H1 (cell line): ENCODE measurements at regions of chr12 and their contacts with region 1.

Region 1: GRCh38 chr12:8681041-8681902 is 16.5 kb upstream of the RIMKLB start:
- DNase-seq: no peak
- H3K4me3 ChIP-seq: peak overlapping the region in 1 of 4 experiments; percentile 35; a peak in 2 of 8 replicates
- H3K27ac ChIP-seq: no peak overlapping the region
- H3K4me1 ChIP-seq: peaks cover 0 to 15% (median 11%) of the 10 kb centered on the region in 4 experiments; a peak in 6 of 7 replicates
- H3K27me3 ChIP-seq: no peaks in the 10 kb centered on the region
- CTCF ChIP-seq: no peak
- EP300 ChIP-seq: no peak
- POLR2A ChIP-seq: no peak
- RAD21 ChIP-seq: no peak

Region 2: GRCh38 chr12:8078398-8078797 is 602.9 kb before region 1 on chr12:
- CTCF ChIA-PET with region 1: no interaction called
- POLR2A ChIA-PET with region 1: no interaction called
- DNase-seq: no peak
- H3K4me3 ChIP-seq: no peak overlapping the region
- H3K27ac ChIP-seq: no peak overlapping the region
- H3K4me1 ChIP-seq: 0 out of 7 replicates have a peak, but pooled peaks cover 0 to 3% (median 0%) of the 10 kb centered on the region in 4 experiments
- H3K27me3 ChIP-seq: no peaks in the 10 kb centered on the region
- CTCF ChIP-seq: peak; percentile 22 to 65 (median 47)
- EP300 ChIP-seq: no peak
- POLR2A ChIP-seq: no peak
- RAD21 ChIP-seq: peak; percentile 79 to 81

Region 3: DNA sequence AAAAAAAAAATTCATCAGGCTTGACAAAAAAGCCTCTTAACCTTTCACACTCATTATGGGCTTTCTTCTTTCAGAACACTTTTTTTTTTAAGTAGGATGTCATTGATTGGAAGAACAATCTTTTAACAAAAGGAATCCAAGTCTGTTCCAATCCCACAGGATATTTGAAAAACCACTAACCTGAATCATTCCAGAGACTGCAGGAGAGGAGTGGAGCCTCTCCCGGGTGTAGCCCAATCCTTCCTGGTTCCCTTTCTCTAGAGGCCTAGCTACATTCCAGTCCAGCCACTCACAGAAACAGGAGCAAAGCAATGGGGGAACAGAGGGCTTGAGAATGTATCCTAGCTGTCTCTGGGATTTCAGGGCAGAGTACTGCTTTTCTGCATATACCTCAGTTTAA is 22.9 kb before region 1 on chr12:
- CTCF ChIA-PET with region 1: interaction called, 16 read pairs
- POLR2A ChIA-PET with region 1: interaction called, 4 read pairs
- DNase-seq: no peak
- H3K4me3 ChIP-seq: no peak overlapping the region
- H3K27ac ChIP-seq: no peak overlapping the region
- H3K4me1 ChIP-seq: no peaks in the 10 kb centered on the region; a peak in 1 of 7 replicates
- H3K27me3 ChIP-seq: no peaks in the 10 kb centered on the region
- CTCF ChIP-seq: no peak
- EP300 ChIP-seq: no peak
- POLR2A ChIP-seq: no peak
- RAD21 ChIP-seq: no peak

Region 4: DNA sequence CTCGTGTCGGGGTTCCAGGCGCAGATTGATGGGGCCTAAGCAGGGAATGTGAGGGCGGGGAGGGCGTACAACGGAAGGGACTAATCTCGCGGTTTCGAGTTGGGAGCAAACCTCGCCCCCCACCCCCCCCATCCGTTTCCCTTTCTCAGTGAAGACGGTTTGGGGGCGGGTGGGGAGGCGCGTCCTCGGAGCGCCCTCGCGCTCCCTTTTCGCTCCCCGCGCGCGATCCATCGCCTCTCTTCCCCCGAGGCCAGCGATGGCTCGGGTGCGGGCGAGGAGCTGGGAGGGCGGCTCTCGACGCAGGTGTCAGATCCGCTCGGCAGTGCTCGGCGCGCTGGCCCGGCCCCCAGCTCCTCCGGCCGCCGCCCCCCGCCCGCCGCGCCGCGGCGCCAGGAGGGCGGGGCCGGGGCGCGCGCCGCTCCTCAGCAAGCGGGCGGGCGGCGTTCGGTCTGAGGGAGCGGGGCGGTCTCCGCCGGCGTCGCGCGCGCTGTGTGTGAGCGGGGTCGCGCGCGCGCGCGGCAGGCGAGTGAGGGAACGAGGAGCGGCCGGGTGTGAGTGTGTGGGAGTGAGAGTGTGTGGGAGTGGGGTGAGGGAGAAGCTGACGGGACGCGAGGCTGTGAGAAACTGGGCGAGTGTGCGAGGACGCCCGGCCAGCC is 16.3 kb after region 1 on chr12 and contains the start of gene RIMKLB:
- CTCF ChIA-PET with region 1: interaction called, 14 read pairs
- POLR2A ChIA-PET with region 1: interaction called, 10 read pairs
- DNase-seq: peak in 1 of 2 experiments; percentile 82
- H3K4me3 ChIP-seq: peak within 1 kb of the TSS; percentile 72 to 92 (median 80)
- H3K27ac ChIP-seq: peak within 1 kb of the TSS; percentile 92
- H3K4me1 ChIP-seq: peaks cover 2 to 9% (median 5%) of the 10 kb centered on the region in 4 experiments; a peak in 4 of 7 replicates
- H3K27me3 ChIP-seq: no peaks in the 10 kb centered on the region
- CTCF ChIP-seq: no peak
- EP300 ChIP-seq: no peak
- POLR2A ChIP-seq: peak in 1 of 2 experiments; percentile 19; a peak in 2 of 3 replicates
- RAD21 ChIP-seq: no peak
- total RNA-seq, gene RIMKLB: 75.7 and 78.2 TPM in 2 replicates

Region 5: DNA sequence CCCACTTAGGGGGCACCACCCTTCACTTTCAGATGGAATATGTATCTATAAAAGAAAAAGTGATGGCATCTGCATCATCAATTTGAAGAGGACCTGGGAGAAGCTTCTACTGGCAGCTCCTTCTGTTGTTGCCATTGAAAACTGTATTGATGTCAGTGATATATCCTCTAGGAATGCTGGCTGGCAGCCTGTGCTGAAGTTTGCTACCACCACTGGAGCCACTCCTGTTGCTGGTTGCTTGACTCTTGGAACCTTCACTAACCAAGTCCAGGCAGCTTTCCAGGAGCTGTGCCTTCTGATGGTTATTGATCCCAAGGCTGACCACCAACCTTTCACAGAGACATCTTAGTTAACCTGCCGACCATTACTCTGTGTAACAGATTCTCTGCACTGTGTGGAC is 61.2 kb after region 1 on chr12:
- CTCF ChIA-PET with region 1: interaction called, 12 read pairs
- POLR2A ChIA-PET with region 1: no interaction called
- DNase-seq: no peak
- H3K4me3 ChIP-seq: no peak overlapping the region
- H3K27ac ChIP-seq: no peak overlapping the region
- H3K4me1 ChIP-seq: no peaks in the 10 kb centered on the region
- H3K27me3 ChIP-seq: no peaks in the 10 kb centered on the region
- CTCF ChIP-seq: no peak
- EP300 ChIP-seq: no peak
- POLR2A ChIP-seq: no peak
- RAD21 ChIP-seq: no peak

Region 6: DNA sequence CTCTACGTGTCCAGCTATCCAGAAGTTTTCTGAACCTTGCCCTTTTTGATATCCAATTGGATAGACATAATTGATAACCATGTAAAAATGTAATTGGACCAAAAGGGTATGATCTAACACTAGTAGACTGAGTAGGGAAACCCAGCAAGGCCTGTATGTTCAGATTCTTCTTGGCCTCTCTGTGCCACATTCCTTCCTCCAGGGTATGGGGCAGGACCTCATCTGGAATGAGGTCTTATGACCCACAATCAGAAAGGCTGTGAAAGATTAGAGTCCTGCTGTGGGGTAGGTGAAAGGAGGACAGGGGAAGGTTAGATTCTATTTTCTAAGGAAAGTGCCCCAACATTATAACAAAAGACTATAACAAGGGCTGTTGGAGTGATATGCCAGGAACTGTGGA is 89.8 kb after region 1 on chr12:
- CTCF ChIA-PET with region 1: interaction called, 10 read pairs
- POLR2A ChIA-PET with region 1: no interaction called
- DNase-seq: no peak
- H3K4me3 ChIP-seq: no peak overlapping the region
- H3K27ac ChIP-seq: no peak overlapping the region
- H3K4me1 ChIP-seq: peaks cover 0 to 3% (median 0%) of the 10 kb centered on the region in 4 experiments; a peak in 3 of 7 replicates
- H3K27me3 ChIP-seq: no peaks in the 10 kb centered on the region
- CTCF ChIP-seq: no peak
- EP300 ChIP-seq: no peak
- POLR2A ChIP-seq: no peak
- RAD21 ChIP-seq: no peak

Region 7: DNA sequence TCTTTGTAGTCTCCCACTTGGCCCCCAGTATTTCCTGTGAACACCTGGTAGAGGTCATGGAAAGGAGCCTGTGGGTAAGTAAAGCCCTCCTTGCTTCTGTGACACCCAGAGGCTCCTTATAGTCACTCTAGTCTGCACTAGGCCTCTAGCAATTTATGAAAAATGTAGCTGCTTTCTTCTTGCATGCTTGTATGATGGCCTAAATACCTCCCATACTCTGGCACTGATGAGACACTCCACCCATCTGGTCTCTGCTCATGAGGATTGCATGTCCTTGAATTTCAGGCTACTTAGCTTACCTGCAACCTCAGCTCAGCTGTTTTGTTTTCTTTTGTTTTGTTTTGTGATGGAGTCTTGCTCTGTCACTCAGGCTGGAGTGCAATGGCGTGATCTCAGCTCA is 136.6 kb after region 1 on chr12:
- CTCF ChIA-PET with region 1: interaction called, 43 read pairs
- POLR2A ChIA-PET with region 1: interaction called, 4 read pairs
- DNase-seq: no peak
- H3K4me3 ChIP-seq: no peak overlapping the region
- H3K27ac ChIP-seq: no peak overlapping the region
- H3K4me1 ChIP-seq: peaks cover 3 to 21% (median 19%) of the 10 kb centered on the region in 4 experiments
- H3K27me3 ChIP-seq: no peaks in the 10 kb centered on the region
- CTCF ChIP-seq: no peak
- EP300 ChIP-seq: no peak
- POLR2A ChIP-seq: no peak
- RAD21 ChIP-seq: no peak

Region 8: GRCh38 chr12:9049520-9050133 is 368.4 kb after region 1 on chr12:
- CTCF ChIA-PET with region 1: interaction called, 15 read pairs
- POLR2A ChIA-PET with region 1: no interaction called
- DNase-seq: no peak
- H3K4me3 ChIP-seq: no peak overlapping the region
- H3K27ac ChIP-seq: no peak overlapping the region
- H3K4me1 ChIP-seq: no peaks in the 10 kb centered on the region
- H3K27me3 ChIP-seq: no peaks in the 10 kb centered on the region
- CTCF ChIP-seq: peak in 2 of 3 experiments; percentile 35; a peak in 2 of 4 replicates
- EP300 ChIP-seq: no peak
- POLR2A ChIP-seq: no peak
- RAD21 ChIP-seq: peak; percentile 62 to 65